Breast epithelium (tissue), 4 donors: ENCODE measurements at regions of chr4 and their contacts with region 1.

Region 1: GRCh38 chr4:18844726-18845125 is 823.2 kb upstream of the LCORL start:
- DNase-seq: no peak
- H3K4me3 ChIP-seq: no peak overlapping the region
- H3K27ac ChIP-seq: no peak overlapping the region
- H3K4me1 ChIP-seq: no peaks in the 10 kb centered on the region
- H3K27me3 ChIP-seq: no peaks in the 10 kb centered on the region
- CTCF ChIP-seq: no peak
- POLR2A ChIP-seq: no peak

Region 2: DNA sequence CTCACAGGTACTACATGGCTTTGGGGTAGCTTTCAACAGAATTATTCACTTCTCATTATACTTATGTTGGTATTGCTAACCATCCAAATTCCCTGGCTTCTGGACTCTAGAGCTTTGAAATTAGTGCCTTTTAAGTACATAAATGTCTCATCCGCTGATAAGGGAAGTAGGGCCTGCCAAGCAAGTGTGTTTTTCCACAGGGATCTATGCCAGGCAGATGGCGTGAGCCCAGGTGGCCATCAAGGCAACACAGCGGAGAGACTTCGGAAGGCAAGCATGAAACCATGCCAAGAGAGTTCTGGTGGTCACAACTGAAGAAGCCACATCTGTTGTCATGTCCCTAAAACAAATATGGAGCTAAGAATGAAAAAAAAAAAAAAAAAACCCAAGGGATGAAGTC is 320.1 kb before region 1 on chr4:
- intact Hi-C with region 1: loop called (anchors 5 kb)
- DNase-seq: no peak
- H3K4me3 ChIP-seq: no peak overlapping the region
- H3K27ac ChIP-seq: no peak overlapping the region
- H3K4me1 ChIP-seq: no peaks in the 10 kb centered on the region
- H3K27me3 ChIP-seq: no peaks in the 10 kb centered on the region
- CTCF ChIP-seq: no peak
- POLR2A ChIP-seq: no peak